ENCODE measurements at regions of chr7 and their contacts with region 1.

Region 1: GRCh38 chr7:123797673-123798527 is 47.1 kb upstream of the HYAL4 start:
- DNase-seq: no peak
- H3K4me3 ChIP-seq: no peak overlapping the region
- H3K27ac ChIP-seq: peak overlapping the region; percentile 56
- H3K4me1 ChIP-seq: peaks cover 4% of the 10 kb centered on the region
- H3K27me3 ChIP-seq: no peaks in the 10 kb centered on the region
- CTCF ChIP-seq: peak; percentile 52

Region 2: GRCh38 chr7:123682690-123683089 is 115.2 kb before region 1 on chr7:
- intact Hi-C with region 1: loop called (anchors 5 kb)
- DNase-seq: peak; percentile 36
- H3K4me3 ChIP-seq: no peak overlapping the region
- H3K27ac ChIP-seq: no peak overlapping the region
- H3K4me1 ChIP-seq: no peaks in the 10 kb centered on the region
- H3K27me3 ChIP-seq: no peaks in the 10 kb centered on the region
- CTCF ChIP-seq: peak; percentile 48

Region 3: GRCh38 chr7:123709525-123709924 is 88.4 kb before region 1 on chr7:
- intact Hi-C with region 1: loop called (anchors 10 kb)
- DNase-seq: no peak
- H3K4me3 ChIP-seq: no peak overlapping the region
- H3K27ac ChIP-seq: no peak overlapping the region
- H3K4me1 ChIP-seq: no peaks in the 10 kb centered on the region
- H3K27me3 ChIP-seq: no peaks in the 10 kb centered on the region
- CTCF ChIP-seq: no peak